Activated naive CD4-positive, alpha-beta T cell treated with anti-CD3 and anti-CD28 coated beads, Interleukin-2, amount 10 ng/mL, durations not matched to agents 7 days and 5 days (primary cell): ENCODE measurements at regions of chr7 and their contacts with region 1.

Region 1: GRCh38 chr7:142811154-142811737 is 40.5 kb downstream of the PRSS2 start:
- DNase-seq: peak; percentile 54
- H3K4me3 Mint-ChIP-seq: peak overlapping the region; percentile 37
- H3K27ac Mint-ChIP-seq: peak overlapping the region; percentile 100
- H3K4me1 Mint-ChIP-seq: peaks cover 83% of the 10 kb centered on the region
- H3K27me3 Mint-ChIP-seq: peaks cover 1% of the 10 kb centered on the region

Region 2: GRCh38 chr7:142301923-142302550 is 509.2 kb before region 1 on chr7:
- CTCF ChIA-PET with region 1: interaction called, 36 read pairs
- DNase-seq: no peak
- H3K4me3 Mint-ChIP-seq: no peak overlapping the region
- H3K27ac Mint-ChIP-seq: no peak overlapping the region
- H3K4me1 Mint-ChIP-seq: peaks cover 25% of the 10 kb centered on the region
- H3K27me3 Mint-ChIP-seq: peaks cover 37% of the 10 kb centered on the region

Region 3: DNA sequence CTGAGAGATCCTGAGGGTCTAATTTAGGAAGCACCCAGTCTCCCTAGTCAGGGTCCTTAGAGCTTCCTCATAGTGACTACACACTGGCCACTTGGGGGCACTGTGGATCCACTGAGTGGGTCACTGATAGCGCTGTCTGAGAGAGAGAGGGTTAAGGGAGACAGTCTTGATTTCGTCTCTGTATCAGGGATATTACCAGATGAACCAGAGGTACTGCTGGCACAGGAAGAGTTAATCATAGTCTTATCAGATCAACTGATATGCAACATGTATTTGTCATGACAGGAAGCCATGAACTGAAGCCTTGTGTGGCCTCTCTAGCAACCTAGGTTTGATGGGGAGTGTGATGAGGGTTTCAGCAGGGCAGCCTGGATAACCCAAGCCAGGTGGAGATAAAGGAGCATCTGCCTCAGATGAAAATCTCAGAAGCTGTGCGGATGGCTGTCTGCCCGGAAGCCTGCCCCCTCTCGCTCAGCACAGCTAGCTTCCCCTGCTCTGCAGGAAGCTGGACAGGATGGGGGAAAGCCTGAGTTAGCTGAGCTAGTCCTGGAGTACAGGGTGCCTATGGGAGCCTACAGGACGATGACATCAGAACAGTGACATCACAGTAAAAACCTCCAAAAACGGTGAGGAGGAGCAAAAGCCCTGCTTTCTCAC is 276.0 kb before region 1 on chr7:
- CTCF ChIA-PET with region 1: interaction called, 45 read pairs
- DNase-seq: peak; percentile 83
- H3K4me3 Mint-ChIP-seq: peak overlapping the region; percentile 67
- H3K27ac Mint-ChIP-seq: peak overlapping the region; percentile 87
- H3K4me1 Mint-ChIP-seq: peaks cover 39% of the 10 kb centered on the region
- H3K27me3 Mint-ChIP-seq: no peaks in the 10 kb centered on the region

Region 4: GRCh38 chr7:142603870-142604448 is 207.3 kb before region 1 on chr7:
- CTCF ChIA-PET with region 1: interaction called, 20 read pairs
- DNase-seq: peak; percentile 68
- H3K4me3 Mint-ChIP-seq: peak overlapping the region; percentile 35
- H3K27ac Mint-ChIP-seq: no peak overlapping the region
- H3K4me1 Mint-ChIP-seq: peaks cover 18% of the 10 kb centered on the region
- H3K27me3 Mint-ChIP-seq: peaks cover 26% of the 10 kb centered on the region

Region 5: GRCh38 chr7:142711746-142712619 is 99.3 kb before region 1 on chr7:
- CTCF ChIA-PET with region 1: interaction called, 28 read pairs
- DNase-seq: peak; percentile 42
- H3K4me3 Mint-ChIP-seq: peak overlapping the region; percentile 78
- H3K27ac Mint-ChIP-seq: peak overlapping the region; percentile 91
- H3K4me1 Mint-ChIP-seq: peaks cover 80% of the 10 kb centered on the region
- H3K27me3 Mint-ChIP-seq: no peaks in the 10 kb centered on the region

Region 6: DNA sequence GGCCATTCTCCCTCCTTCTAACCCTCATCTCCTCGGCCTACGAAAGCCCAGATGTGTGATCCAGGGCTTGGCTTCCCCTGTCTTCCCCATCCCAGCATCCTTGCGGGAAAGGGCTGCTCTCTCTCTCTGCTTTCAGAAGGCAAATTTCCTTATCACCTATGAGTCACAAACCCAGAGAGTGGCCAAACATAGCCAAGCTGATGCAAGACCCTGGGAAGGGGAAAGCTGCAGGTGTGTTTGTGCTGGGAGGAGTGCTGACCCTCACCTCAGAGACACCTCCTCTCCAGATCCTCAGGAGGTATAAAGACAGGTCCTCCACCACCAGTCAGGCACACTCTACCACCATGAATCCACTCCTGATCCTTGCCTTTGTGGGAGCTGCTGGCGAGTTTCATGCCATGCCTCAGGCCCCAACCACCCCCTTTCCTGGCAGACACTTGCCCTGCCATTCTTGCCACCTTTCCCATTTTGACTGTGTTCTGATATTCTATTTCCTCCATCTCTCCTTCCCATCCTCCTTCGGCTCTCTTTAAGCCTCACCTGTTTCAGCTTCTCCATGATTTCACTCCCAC is 51.1 kb before region 1 on chr7:
- CTCF ChIA-PET with region 1: no interaction called
- DNase-seq: no peak
- H3K4me3 Mint-ChIP-seq: no peak overlapping the region
- H3K27ac Mint-ChIP-seq: no peak overlapping the region
- H3K4me1 Mint-ChIP-seq: no peaks in the 10 kb centered on the region
- H3K27me3 Mint-ChIP-seq: peaks cover 16% of the 10 kb centered on the region

Region 7: DNA sequence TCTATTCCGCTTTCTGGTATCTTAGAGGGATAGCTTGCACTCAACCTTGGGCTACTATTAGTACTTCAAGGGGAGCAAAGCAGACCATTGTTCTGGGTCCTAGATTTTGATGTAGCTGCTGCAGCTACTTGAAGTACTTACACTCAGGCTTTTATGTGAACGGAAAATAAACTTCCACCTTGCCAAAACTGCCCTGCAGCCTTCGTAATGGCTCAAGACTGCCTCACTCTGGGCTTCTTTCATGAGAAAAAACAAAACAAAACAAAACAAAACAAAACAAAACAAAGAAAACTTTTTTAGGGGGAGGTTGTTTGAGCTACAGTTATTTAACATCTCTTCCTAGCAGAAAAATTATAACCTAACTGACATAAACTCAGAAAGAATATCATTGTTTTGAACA is 24.2 kb after region 1 on chr7:
- CTCF ChIA-PET with region 1: interaction called, 28 read pairs
- DNase-seq: peak; percentile 40
- H3K4me3 Mint-ChIP-seq: no peak overlapping the region
- H3K27ac Mint-ChIP-seq: no peak overlapping the region
- H3K4me1 Mint-ChIP-seq: peaks cover 23% of the 10 kb centered on the region
- H3K27me3 Mint-ChIP-seq: no peaks in the 10 kb centered on the region

Region 8: DNA sequence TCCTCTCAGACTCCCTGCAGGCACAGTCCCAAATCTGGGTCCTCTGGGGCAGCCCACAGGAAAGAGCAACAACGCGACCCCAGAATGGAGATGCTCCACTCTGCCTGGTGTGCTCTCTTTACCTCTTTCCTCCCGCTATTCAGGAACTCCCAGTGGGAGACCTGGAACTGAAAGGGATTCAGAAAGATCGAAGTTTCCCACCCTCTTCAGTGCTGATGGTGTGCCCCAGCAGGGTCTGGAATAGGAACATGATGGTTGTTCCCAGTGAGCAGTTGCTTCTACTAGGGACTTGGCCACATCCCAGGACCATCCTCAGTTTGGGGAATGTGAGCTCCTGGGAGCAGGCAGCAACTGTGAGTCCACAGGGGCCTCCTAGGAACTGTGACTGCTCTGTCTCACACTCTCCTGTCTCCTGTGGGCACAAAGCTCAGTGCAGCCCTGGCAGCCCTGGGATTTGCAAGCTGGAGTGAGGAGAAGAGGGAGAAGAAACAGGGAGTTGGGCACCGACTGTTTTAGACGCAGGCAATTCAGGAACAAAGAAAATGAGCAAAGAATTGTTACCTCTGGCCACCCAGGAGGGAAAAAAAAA is 258.8 kb after region 1 on chr7:
- CTCF ChIA-PET with region 1: no interaction called
- DNase-seq: no peak
- H3K4me3 Mint-ChIP-seq: no peak overlapping the region
- H3K27ac Mint-ChIP-seq: no peak overlapping the region
- H3K4me1 Mint-ChIP-seq: no peaks in the 10 kb centered on the region
- H3K27me3 Mint-ChIP-seq: peaks cover 7% of the 10 kb centered on the region